Activated CD4-positive, alpha-beta T cell treated with anti-CD3 and anti-CD28 coated beads, Interleukin-2, amount 10 ng/mL, durations not matched to agents 24 days and 14 days (primary cell): ENCODE measurements at regions of chr6 and their contacts with region 1.

Region 1: GRCh38 chr6:47631269-47631772 is 67.1 kb upstream of the ADGRF4 start:
- DNase-seq: peak; percentile 67
- H3K4me3 Mint-ChIP-seq: no peak overlapping the region
- H3K27ac Mint-ChIP-seq: no peak overlapping the region
- H3K4me1 Mint-ChIP-seq: peaks cover 9% of the 10 kb centered on the region
- H3K27me3 Mint-ChIP-seq: peaks cover 3% of the 10 kb centered on the region

Region 2: GRCh38 chr6:47595797-47596196 is 35.5 kb before region 1 on chr6:
- intact Hi-C with region 1: no loop called
- DNase-seq: no peak
- H3K4me3 Mint-ChIP-seq: no peak overlapping the region
- H3K27ac Mint-ChIP-seq: no peak overlapping the region
- H3K4me1 Mint-ChIP-seq: peaks cover 4% of the 10 kb centered on the region
- H3K27me3 Mint-ChIP-seq: no peaks in the 10 kb centered on the region

Region 3: DNA sequence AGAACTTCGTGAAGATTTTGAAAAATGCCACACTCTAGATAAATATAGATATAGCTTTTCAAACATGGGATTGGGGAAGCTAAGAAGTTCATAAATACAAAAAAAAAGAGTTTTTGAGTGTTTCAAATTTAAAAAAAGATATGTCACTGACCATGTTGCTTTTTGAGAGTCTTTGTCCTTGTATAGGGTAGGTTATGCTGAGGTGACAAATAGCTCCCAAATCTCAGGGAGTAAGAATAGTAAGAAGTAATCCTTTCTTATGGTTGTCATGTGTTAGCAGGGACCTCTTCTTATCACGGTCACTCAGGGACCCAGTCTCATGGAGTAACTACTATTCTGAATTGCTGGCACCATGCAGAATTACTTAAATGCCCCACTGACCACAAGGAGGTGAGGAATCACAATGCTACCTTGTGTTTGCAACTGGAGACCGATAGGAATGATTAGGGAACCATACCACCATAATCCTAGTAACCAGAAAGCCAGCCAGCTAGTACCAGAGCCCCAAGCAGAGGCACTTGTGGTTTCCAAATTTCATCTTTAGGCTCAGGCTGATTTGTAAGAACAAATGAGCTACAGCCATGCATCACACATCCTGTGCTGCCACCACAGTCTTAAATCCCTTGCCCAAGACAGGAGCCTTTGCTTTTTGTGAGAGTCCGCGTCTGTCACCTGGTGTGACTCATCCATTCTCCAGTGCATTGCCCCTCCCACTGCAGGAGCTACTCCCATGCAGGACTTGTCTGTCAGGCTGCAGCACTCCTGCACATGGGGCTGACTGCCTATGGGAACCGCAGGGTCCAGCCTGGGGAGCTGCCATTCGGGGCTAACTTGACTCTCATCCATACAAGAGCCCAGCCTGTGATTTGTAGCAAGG is 24.6 kb after region 1 on chr6:
- intact Hi-C with region 1: no loop called
- DNase-seq: peak; percentile 83
- H3K4me3 Mint-ChIP-seq: no peak overlapping the region
- H3K27ac Mint-ChIP-seq: no peak overlapping the region
- H3K4me1 Mint-ChIP-seq: peaks cover 7% of the 10 kb centered on the region
- H3K27me3 Mint-ChIP-seq: peaks cover 6% of the 10 kb centered on the region

Region 4: GRCh38 chr6:47733879-47734558 is 102.7 kb after region 1 on chr6:
- intact Hi-C with region 1: loop called (anchors 1 kb)
- DNase-seq: peak; percentile 63
- H3K4me3 Mint-ChIP-seq: no peak overlapping the region
- H3K27ac Mint-ChIP-seq: no peak overlapping the region
- H3K4me1 Mint-ChIP-seq: peaks cover 2% of the 10 kb centered on the region
- H3K27me3 Mint-ChIP-seq: peaks cover 9% of the 10 kb centered on the region

Region 5: DNA sequence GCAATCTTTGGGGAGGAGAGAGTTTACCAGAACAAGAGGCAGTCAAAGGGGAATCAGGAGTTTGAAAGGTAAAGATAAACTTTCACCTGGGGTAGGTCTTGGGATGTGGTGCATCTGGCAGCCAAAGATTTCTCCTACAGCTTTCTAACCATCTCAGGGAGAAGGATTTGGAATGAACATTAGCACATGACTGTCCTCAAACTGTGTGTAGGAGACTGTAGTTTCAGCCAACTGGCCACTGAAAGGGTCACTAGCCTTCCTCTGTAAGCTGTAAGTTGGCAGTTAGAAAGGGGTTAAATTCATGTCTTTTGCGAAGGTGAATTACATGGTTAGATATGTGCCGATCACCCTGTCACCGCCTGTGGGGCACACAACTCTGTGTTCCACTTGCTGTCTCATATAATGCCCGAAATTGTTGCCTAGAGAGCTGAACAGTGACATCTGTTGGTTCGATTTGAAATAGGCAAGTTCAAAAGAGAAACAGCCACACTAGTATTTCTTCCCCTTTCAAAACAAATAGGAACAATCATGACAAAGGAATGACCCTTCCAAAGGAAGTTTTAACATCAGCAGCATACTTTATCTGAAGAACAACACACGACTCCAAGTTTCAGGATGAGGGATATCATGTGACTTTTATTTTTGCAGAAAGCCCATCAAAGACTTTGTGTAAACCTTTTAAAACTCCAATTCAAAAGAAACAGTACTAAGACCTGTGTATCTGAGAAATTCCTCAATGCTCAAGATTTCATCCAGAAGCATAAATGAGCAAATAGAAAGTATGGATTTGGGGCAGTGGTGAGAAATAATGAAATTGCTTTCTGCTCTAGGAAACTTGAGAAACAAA is 149.4 kb after region 1 on chr6:
- intact Hi-C with region 1: loop called (anchors 1 kb)
- DNase-seq: peak; percentile 79
- H3K4me3 Mint-ChIP-seq: no peak overlapping the region
- H3K27ac Mint-ChIP-seq: no peak overlapping the region
- H3K4me1 Mint-ChIP-seq: peaks cover 8% of the 10 kb centered on the region
- H3K27me3 Mint-ChIP-seq: peaks cover 34% of the 10 kb centered on the region

Region 6: DNA sequence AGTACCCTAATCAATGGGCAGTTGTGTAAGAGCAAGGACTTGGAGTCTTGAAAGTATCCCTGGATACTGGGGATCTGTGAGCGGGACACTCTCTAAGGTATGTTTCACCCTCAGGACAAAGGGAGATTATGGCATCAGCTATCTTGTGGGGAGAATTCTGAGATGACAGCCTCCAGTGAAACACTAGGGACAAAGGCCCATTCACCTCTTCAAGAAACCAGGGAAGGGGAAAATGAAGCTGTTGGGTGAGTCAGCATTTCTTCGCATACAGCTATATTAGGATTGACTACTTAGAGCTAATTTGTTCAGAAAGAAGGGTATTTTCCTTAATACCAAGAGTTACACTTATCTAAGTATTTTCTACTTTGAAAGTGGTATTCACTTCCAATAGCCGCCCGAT is 186.4 kb after region 1 on chr6:
- intact Hi-C with region 1: no loop called
- DNase-seq: no peak
- H3K4me3 Mint-ChIP-seq: no peak overlapping the region
- H3K27ac Mint-ChIP-seq: no peak overlapping the region
- H3K4me1 Mint-ChIP-seq: no peaks in the 10 kb centered on the region
- H3K27me3 Mint-ChIP-seq: peaks cover 3% of the 10 kb centered on the region